HCT116 (cell line): ENCODE measurements at regions of chr1 and their contacts with region 1.

Region 1: DNA sequence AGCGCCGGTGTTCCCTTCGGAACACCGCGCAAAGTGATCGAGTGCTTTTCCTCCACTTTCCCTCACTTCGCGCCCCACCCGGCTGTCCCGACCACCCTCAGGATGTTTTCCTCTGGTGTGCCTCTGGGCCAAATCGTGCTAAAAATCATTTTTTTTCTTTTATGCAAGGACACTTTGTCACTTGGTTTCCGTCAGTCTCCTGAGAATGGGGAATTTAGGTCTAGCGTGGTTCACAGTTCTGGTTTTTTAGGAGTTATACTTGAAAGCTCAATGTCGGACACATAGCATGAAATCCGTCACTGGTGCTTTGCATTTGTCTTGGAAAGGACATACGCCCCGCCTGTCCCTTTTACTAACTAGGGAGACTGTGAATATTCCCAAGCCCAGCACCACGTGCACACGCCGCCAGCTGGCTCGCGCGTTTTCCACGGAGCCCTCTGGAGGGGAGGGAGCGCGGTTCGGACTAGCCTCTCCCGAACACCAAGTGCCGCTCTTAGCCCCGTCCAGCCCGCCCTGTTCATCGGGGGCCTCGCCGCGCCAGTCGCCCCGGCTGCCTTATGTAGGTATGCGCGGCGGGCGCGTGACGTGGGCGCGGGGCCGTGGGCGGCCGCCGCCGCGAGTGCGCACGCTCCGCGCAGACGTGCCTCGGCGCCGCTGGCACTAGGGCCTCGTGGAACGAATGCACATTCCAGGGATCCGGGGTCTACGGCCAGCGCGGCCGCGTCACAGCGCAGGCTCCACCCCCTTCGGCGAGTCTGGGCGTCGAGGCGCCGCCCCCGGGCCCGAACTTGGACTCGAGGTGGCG is 572 bp upstream of the IRF2BP2 start:
- DNase-seq: peak; percentile 82
- ATAC-seq: peak; percentile 77
- H3K4me3 ChIP-seq: peak overlapping the region; percentile 54 to 64
- H3K27ac ChIP-seq: peak overlapping the region; percentile 89
- H3K4me1 ChIP-seq: peaks cover 47 to 71% of the 10 kb centered on the region in 2 experiments
- H3K27me3 ChIP-seq: no peaks in the 10 kb centered on the region
- CTCF ChIP-seq: 0 out of 6 replicates have a peak, but pooled peaks of 1 of the 3 experiments have one; percentile 11
- POLR2A ChIP-seq: no peak
- RAD21 ChIP-seq: no peak

Region 2: GRCh38 chr1:234599617-234600417 is 10.7 kb before region 1 on chr1:
- CTCF ChIA-PET with region 1: no interaction called
- POLR2A ChIA-PET with region 1: interaction called, 26 read pairs
- RAD21 ChIA-PET with region 1: no interaction called
- intact Hi-C with region 1: no loop called
- DNase-seq: peak; percentile 51
- ATAC-seq: peak; percentile 85
- H3K4me3 ChIP-seq: peak overlapping the region; percentile 45 to 55
- H3K27ac ChIP-seq: peak overlapping the region; percentile 69
- H3K4me1 ChIP-seq: peaks cover 55 to 61% of the 10 kb centered on the region in 2 experiments
- H3K27me3 ChIP-seq: no peaks in the 10 kb centered on the region
- CTCF ChIP-seq: no peak
- POLR2A ChIP-seq: peak; percentile 35
- RAD21 ChIP-seq: 0 out of 2 replicates have a peak, but pooled peaks have one; percentile 6

Region 3: GRCh38 chr1:234722904-234723720 is 112.6 kb after region 1 on chr1:
- CTCF ChIA-PET with region 1: interaction called, 4 read pairs
- POLR2A ChIA-PET with region 1: interaction called, 46 read pairs
- RAD21 ChIA-PET with region 1: interaction called, 3 read pairs
- intact Hi-C with region 1: loop called (anchors 1 kb)
- DNase-seq: peak; percentile 79
- ATAC-seq: peak; percentile 24
- H3K4me3 ChIP-seq: peak overlapping the region; percentile 16 to 46
- H3K27ac ChIP-seq: peak overlapping the region; percentile 66
- H3K4me1 ChIP-seq: peaks cover 46 to 63% of the 10 kb centered on the region in 2 experiments
- H3K27me3 ChIP-seq: no peaks in the 10 kb centered on the region; the same call in 1 of the 2 replicates
- CTCF ChIP-seq: no peak
- POLR2A ChIP-seq: no peak
- RAD21 ChIP-seq: peak; percentile 30; the same call in 1 of the 2 replicates

Region 4: GRCh38 chr1:234980645-234981396 is 370.3 kb after region 1 on chr1:
- CTCF ChIA-PET with region 1: no interaction called
- POLR2A ChIA-PET with region 1: interaction called, 7 read pairs
- RAD21 ChIA-PET with region 1: no interaction called
- intact Hi-C with region 1: loop called (anchors 5 kb)
- DNase-seq: peak; percentile 79
- ATAC-seq: peak; percentile 82
- H3K4me3 ChIP-seq: peak overlapping the region; percentile 17 to 44
- H3K27ac ChIP-seq: peak overlapping the region; percentile 48
- H3K4me1 ChIP-seq: peaks cover 44 to 65% of the 10 kb centered on the region in 2 experiments
- H3K27me3 ChIP-seq: no peaks in the 10 kb centered on the region
- CTCF ChIP-seq: no peak
- POLR2A ChIP-seq: peak; percentile 52
- RAD21 ChIP-seq: no peak